ENCODE measurements at regions of chr5 and their contacts with region 1.

Region 1: DNA sequence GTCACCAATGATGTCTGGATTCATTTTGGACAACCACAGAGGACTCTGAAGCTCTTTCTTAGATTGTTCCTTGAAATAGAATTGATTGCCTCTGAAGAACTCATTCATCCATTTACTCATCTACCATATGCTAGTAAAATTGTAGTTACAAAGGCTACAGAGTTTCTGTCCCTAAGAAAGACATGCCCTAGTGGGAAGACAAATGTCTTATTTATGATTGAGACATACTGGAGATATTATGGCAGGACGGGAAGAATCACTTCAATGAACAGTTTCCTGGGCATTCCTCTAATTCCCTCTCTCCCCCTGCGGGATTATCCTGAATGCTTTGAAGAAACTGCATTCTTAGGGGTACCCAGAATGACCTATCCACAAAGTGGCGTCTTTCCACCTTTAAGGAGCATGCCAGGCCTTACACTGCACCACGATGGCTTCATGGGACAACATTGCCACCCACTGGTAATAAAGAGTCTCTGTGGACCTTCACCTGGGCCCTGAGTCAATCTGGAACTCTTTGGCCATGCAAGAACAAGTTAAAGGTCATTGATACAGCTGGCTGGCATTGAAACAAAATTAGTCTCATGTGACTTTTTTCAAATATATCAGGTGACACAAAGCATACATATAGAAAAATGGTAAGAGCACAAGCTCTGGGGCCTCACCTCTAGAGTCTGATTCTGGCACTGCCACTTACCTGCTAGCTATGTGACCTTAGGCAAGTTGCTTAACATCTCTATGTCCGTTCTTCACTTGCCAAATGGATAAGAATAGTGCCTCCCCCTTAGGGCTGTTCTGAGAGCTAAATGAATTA is 32.1 kb downstream of the ANKRD55 start:
- DNase-seq: peak; percentile 55
- ATAC-seq: peak; percentile 86
- H3K4me3 ChIP-seq: no peak overlapping the region
- H3K4me3 Mint-ChIP-seq: no peak overlapping the region
- H3K27ac ChIP-seq: no peak overlapping the region
- H3K27ac Mint-ChIP-seq: no peak overlapping the region
- H3K4me1 ChIP-seq: no peaks in the 10 kb centered on the region
- H3K4me1 Mint-ChIP-seq: no peaks in the 10 kb centered on the region
- H3K27me3 ChIP-seq: no peaks in the 10 kb centered on the region
- H3K27me3 Mint-ChIP-seq: no peaks in the 10 kb centered on the region
- CTCF ChIP-seq: peak; percentile 43

Region 2: DNA sequence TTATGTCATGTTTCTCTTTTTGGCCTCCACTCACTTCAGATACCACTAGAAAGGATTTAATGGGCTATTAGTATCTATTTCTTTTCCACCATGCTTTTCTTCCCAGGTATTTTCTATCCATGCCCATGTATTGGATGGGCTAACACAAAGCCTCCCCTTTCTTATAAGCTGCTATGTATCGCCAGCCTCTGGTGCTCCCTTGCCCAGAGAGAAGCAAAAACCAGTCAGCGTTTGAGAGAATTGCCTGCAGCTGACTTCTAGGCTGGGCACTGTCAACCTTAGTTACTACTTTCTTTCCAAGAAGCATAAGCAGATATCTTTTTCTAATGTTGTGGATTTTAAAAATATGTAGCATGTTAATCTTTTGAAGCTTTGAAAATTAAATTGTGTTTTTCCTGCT is 1775.8 kb before region 1 on chr5:
- CTCF ChIA-PET with region 1: no interaction called
- POLR2A ChIA-PET with region 1: no interaction called
- intact Hi-C with region 1: no loop called
- DNase-seq: no peak
- ATAC-seq: no peak
- H3K4me3 ChIP-seq: no peak overlapping the region
- H3K4me3 Mint-ChIP-seq: no peak overlapping the region
- H3K27ac ChIP-seq: no peak overlapping the region
- H3K27ac Mint-ChIP-seq: no peak overlapping the region
- H3K4me1 ChIP-seq: no peaks in the 10 kb centered on the region
- H3K4me1 Mint-ChIP-seq: no peaks in the 10 kb centered on the region
- H3K27me3 ChIP-seq: peaks cover 0 to 5% (median under 1%) of the 10 kb centered on the region in 4 experiments
- H3K27me3 Mint-ChIP-seq: peaks cover 21% of the 10 kb centered on the region
- CTCF ChIP-seq: no peak

Region 3: DNA sequence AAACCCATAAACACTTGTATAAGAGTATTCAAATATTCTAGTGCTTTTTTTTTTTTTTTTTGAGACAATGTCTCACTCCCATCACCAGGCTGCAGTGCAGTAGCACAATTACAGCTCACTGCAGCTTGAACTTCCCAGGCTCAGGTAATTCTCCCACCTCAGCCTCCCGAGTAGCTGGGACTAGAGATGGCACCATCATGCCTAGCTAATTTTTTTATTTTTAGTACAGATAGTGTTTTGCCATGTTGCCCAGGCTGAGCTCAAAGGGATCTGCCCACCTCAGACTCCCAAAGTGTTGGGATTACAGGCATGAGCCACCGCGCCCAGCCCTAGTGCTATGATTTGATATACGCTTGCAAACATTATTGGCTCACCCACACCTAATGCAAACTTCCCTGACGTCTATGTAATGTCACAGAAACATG is 218.1 kb before region 1 on chr5:
- CTCF ChIA-PET with region 1: interaction called, 5 read pairs
- POLR2A ChIA-PET with region 1: no interaction called
- intact Hi-C with region 1: loop called (anchors 5 kb)
- DNase-seq: no peak
- ATAC-seq: no peak
- H3K4me3 ChIP-seq: no peak overlapping the region
- H3K4me3 Mint-ChIP-seq: no peak overlapping the region
- H3K27ac ChIP-seq: no peak overlapping the region
- H3K27ac Mint-ChIP-seq: no peak overlapping the region
- H3K4me1 ChIP-seq: no peaks in the 10 kb centered on the region
- H3K4me1 Mint-ChIP-seq: peaks cover 3% of the 10 kb centered on the region
- H3K27me3 ChIP-seq: no peaks in the 10 kb centered on the region
- H3K27me3 Mint-ChIP-seq: no peaks in the 10 kb centered on the region
- CTCF ChIP-seq: no peak

Region 4: GRCh38 chr5:56328753-56329560 is 127.9 kb after region 1 on chr5:
- CTCF ChIA-PET with region 1: no interaction called
- POLR2A ChIA-PET with region 1: no interaction called
- intact Hi-C with region 1: no loop called
- DNase-seq: peak; percentile 59
- ATAC-seq: peak; percentile 76
- H3K4me3 ChIP-seq: peak overlapping the region in 1 of 5 experiments; percentile 46
- H3K4me3 Mint-ChIP-seq: peak overlapping the region; percentile 47
- H3K27ac ChIP-seq: peak overlapping the region; percentile 77 to 92
- H3K27ac Mint-ChIP-seq: peak overlapping the region; percentile 91
- H3K4me1 ChIP-seq: peaks cover 41 to 47% of the 10 kb centered on the region in 2 donors
- H3K4me1 Mint-ChIP-seq: peaks cover 60% of the 10 kb centered on the region
- H3K27me3 ChIP-seq: no peaks in the 10 kb centered on the region
- H3K27me3 Mint-ChIP-seq: no peaks in the 10 kb centered on the region
- CTCF ChIP-seq: no peak